Head of caudate nucleus (tissue), 42 donors: ENCODE measurements at regions of chr2 and their contacts with region 1.

Region 1: GRCh38 chr2:70789304-70790135 is 923 bp downstream of the FIGLA start:
- DNase-seq: peak; percentile 67 to 92 (median 80)

Region 2: GRCh38 chr2:70655786-70656185 is 133.7 kb before region 1 on chr2:
- intact Hi-C with region 1: loop called (anchors 2 kb)
- DNase-seq: peak in 1 of 42 donors; percentile 29

Region 3: GRCh38 chr2:70733646-70734180 is 55.8 kb before region 1 on chr2:
- intact Hi-C with region 1: no loop called
- DNase-seq: peak in 4 of 42 donors; percentile 14 to 59 (median 26)

Region 4: GRCh38 chr2:70948337-70949003 is 158.9 kb after region 1 on chr2:
- intact Hi-C with region 1: loop called (anchors 5 kb)
- DNase-seq: peak; percentile 58 to 92 (median 84)